MCF 10A (cell line): ENCODE measurements at regions of chr9 and their contacts with region 1.

Region 1: GRCh38 chr9:130254752-130255630 is 10.6 kb upstream of the HMCN2 start:
- DNase-seq: no peak
- H3K4me3 Mint-ChIP-seq: no peak overlapping the region
- H3K27ac Mint-ChIP-seq: no peak overlapping the region
- H3K4me1 Mint-ChIP-seq: no peaks in the 10 kb centered on the region
- H3K27me3 Mint-ChIP-seq: peaks cover 55% of the 10 kb centered on the region
- CTCF ChIP-seq: no peak

Region 2: GRCh38 chr9:130243015-130243734 is 11.8 kb before region 1 on chr9:
- CTCF ChIA-PET with region 1: interaction called, 16 read pairs
- POLR2A ChIA-PET with region 1: no interaction called
- intact Hi-C with region 1: no loop called
- DNase-seq: peak; percentile 64
- H3K4me3 Mint-ChIP-seq: peak overlapping the region; percentile 45
- H3K27ac Mint-ChIP-seq: peak overlapping the region; percentile 84
- H3K4me1 Mint-ChIP-seq: peaks cover 11% of the 10 kb centered on the region
- H3K27me3 Mint-ChIP-seq: no peaks in the 10 kb centered on the region
- CTCF ChIP-seq: peak; percentile 93